PC-3 (cell line): ENCODE measurements at regions of chr17 and their contacts with region 1.

Region 1: GRCh38 chr17:37489197-37490001 is at the start of gene DUSP14:
- DNase-seq: peak; percentile 83
- ATAC-seq: peak; percentile 55
- H3K4me3 ChIP-seq: peak within 1 kb of the TSS; percentile 85
- H3K27ac ChIP-seq: peak within 1 kb of the TSS; percentile 98
- H3K4me1 ChIP-seq: peaks cover 47% of the 10 kb centered on the region
- H3K27me3 ChIP-seq: no peaks in the 10 kb centered on the region
- CTCF ChIP-seq: no peak
- total RNA-seq, gene DUSP14: 49.4 and 56.2 TPM in 2 replicates

Region 2: GRCh38 chr17:37406635-37407461 is 82.6 kb before region 1 on chr17 and contains the starts of genes ACACA and TADA2A:
- CTCF ChIA-PET with region 1: no interaction called
- POLR2A ChIA-PET with region 1: no interaction called
- intact Hi-C with region 1: loop called (anchors 10 kb)
- DNase-seq: peak; percentile 76
- ATAC-seq: peak; percentile 94
- H3K4me3 ChIP-seq: peak within 1 kb of the TSS; percentile 99
- H3K27ac ChIP-seq: peak within 1 kb of the TSS; percentile 83
- H3K4me1 ChIP-seq: peaks cover 12% of the 10 kb centered on the region
- H3K27me3 ChIP-seq: no peaks in the 10 kb centered on the region
- CTCF ChIP-seq: no peak
- total RNA-seq, gene ACACA: 33.0 and 40.3 TPM in 2 replicates
- total RNA-seq, gene TADA2A: 12.7 and 16.5 TPM in 2 replicates

Region 3: DNA sequence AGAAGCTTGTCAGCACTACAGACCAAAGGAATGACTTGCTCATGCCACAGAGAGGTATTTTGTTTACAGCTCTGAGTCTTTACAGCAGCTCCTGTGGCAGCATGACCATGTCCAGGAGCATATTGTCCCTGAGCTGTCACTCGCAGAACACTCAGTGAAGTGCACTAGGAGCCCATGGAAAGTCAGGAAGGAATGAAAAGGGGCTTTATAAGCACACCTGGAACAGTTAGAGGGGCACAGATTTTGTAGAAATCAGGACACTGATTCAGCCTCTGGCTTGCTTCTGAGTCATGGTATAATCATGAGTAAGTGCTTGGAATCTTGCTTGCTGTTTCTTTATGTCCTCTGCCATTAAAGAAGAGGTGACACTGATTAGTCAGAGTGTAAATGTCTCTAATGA is 41.8 kb before region 1 on chr17:
- CTCF ChIA-PET with region 1: no interaction called
- POLR2A ChIA-PET with region 1: no interaction called
- intact Hi-C with region 1: loop called (anchors 5 kb)
- DNase-seq: peak; percentile 55
- ATAC-seq: peak; percentile 73
- H3K4me3 ChIP-seq: no peak overlapping the region
- H3K27ac ChIP-seq: peak overlapping the region; percentile 70
- H3K4me1 ChIP-seq: peaks cover 48% of the 10 kb centered on the region
- H3K27me3 ChIP-seq: no peaks in the 10 kb centered on the region
- CTCF ChIP-seq: no peak

Region 4: GRCh38 chr17:37466471-37466870 is 22.9 kb before region 1 on chr17:
- CTCF ChIA-PET with region 1: no interaction called
- POLR2A ChIA-PET with region 1: no interaction called
- intact Hi-C with region 1: loop called (anchors 1 kb)
- DNase-seq: peak; percentile 73
- ATAC-seq: peak; percentile 91
- H3K4me3 ChIP-seq: no peak overlapping the region
- H3K27ac ChIP-seq: peak overlapping the region; percentile 68
- H3K4me1 ChIP-seq: peaks cover 20% of the 10 kb centered on the region
- H3K27me3 ChIP-seq: no peaks in the 10 kb centered on the region
- CTCF ChIP-seq: no peak